Calu3 (cell line): ENCODE measurements at regions of chr2 and their contacts with region 1.

Region 1: GRCh38 chr2:43226558-43226954 is at the start of gene ZFP36L2:
- DNase-seq: peak; percentile 98
- H3K4me3 Mint-ChIP-seq: peak within 1 kb of the TSS; percentile 98
- H3K27ac Mint-ChIP-seq: peak within 1 kb of the TSS; percentile 94
- H3K4me1 Mint-ChIP-seq: peaks cover 26% of the 10 kb centered on the region
- H3K27me3 Mint-ChIP-seq: no peaks in the 10 kb centered on the region
- CTCF ChIP-seq: no peak
- total RNA-seq, gene ZFP36L2: 90.7 and 120 TPM in 2 replicates

Region 2: DNA sequence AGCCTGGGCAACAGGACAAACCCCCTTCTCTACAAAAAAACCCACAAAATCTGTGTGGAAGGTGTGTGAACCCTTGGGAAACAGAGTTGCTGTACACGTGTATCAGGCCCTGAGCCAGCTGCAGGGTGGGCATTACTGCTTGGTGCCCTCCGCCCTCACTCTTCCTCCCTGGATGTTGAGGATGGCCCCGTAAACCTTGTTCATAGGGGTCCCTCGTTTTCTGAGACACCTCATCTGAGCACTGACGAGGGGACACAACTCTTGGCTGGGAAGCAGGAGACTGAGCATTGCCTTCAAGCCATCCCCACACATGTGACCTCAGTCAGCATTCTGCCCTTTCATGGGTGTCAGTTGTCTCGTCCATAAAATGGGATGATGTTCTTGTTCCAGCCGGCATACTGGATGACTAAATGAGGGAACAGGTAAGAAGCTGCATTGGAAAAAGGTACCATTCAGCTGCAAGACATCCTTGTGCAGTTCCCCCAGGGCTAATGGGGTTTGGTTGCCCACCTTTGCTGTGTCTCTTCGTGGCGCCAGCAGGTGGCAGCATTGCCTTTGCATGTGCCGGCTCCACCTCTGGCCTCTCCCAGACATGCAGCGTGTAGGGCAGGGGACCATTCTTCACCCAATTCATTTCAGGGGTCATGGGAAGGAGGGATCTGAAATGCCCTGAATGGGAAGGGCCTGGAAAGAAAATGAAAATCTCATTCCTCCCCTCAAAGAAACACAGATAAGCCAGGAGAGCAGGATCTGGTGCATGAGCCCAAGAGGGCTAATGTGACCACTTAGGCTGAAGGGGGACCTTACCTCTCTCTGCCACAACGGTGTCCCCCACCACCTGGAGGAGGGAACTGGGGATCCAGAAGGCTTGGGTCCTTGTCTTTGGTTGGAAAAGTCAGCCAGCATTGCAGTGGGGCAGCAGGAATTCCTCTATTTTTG is 397.8 kb before region 1 on chr2:
- CTCF ChIA-PET with region 1: interaction called, 8 read pairs
- intact Hi-C with region 1: loop called (anchors 2 kb)
- DNase-seq: peak; percentile 82
- H3K4me3 Mint-ChIP-seq: no peak overlapping the region
- H3K27ac Mint-ChIP-seq: no peak overlapping the region
- H3K4me1 Mint-ChIP-seq: peaks cover 27% of the 10 kb centered on the region
- H3K27me3 Mint-ChIP-seq: no peaks in the 10 kb centered on the region
- CTCF ChIP-seq: peak; percentile 90

Region 3: GRCh38 chr2:42859006-42859552 is 367.5 kb before region 1 on chr2:
- CTCF ChIA-PET with region 1: interaction called, 3 read pairs
- intact Hi-C with region 1: loop called (anchors 2 kb)
- DNase-seq: peak; percentile 84
- H3K4me3 Mint-ChIP-seq: no peak overlapping the region
- H3K27ac Mint-ChIP-seq: no peak overlapping the region
- H3K4me1 Mint-ChIP-seq: peaks cover 8% of the 10 kb centered on the region
- H3K27me3 Mint-ChIP-seq: no peaks in the 10 kb centered on the region
- CTCF ChIP-seq: peak; percentile 82

Region 4: DNA sequence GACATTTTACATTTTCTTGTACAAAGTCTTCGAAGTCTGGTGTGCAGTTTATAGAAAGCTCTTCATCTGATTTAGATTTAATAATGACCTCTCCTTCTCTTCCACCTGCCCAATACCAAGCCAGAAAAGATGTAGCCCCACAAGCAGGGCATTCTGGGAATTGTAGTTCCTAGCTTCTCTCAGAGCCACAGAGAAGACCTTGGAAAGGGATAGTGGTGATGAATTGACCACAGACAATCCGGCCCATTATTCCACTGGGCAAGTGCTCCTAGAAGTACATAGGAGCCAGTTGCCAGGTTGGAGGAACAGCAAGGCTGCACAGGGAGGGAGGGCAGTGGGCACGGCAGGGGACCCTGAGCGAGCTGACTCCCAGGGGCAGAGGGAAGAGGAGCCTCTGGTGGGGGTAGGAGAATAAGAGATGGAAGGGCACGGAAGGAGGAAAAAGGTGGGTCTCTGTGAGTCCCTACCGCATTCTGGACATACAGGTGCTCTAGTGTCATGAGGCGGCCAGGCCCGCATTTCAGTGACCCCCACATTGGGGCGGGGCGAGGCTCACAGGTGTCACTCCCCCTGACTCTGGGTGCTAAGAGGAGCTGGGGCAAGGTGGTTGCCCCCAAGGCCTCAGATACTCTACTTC is 281.7 kb before region 1 on chr2:
- CTCF ChIA-PET with region 1: interaction called, 4 read pairs
- intact Hi-C with region 1: loop called (anchors 2 kb)
- DNase-seq: no peak
- H3K4me3 Mint-ChIP-seq: no peak overlapping the region
- H3K27ac Mint-ChIP-seq: no peak overlapping the region
- H3K4me1 Mint-ChIP-seq: peaks cover 29% of the 10 kb centered on the region
- H3K27me3 Mint-ChIP-seq: no peaks in the 10 kb centered on the region
- CTCF ChIP-seq: no peak

Region 5: DNA sequence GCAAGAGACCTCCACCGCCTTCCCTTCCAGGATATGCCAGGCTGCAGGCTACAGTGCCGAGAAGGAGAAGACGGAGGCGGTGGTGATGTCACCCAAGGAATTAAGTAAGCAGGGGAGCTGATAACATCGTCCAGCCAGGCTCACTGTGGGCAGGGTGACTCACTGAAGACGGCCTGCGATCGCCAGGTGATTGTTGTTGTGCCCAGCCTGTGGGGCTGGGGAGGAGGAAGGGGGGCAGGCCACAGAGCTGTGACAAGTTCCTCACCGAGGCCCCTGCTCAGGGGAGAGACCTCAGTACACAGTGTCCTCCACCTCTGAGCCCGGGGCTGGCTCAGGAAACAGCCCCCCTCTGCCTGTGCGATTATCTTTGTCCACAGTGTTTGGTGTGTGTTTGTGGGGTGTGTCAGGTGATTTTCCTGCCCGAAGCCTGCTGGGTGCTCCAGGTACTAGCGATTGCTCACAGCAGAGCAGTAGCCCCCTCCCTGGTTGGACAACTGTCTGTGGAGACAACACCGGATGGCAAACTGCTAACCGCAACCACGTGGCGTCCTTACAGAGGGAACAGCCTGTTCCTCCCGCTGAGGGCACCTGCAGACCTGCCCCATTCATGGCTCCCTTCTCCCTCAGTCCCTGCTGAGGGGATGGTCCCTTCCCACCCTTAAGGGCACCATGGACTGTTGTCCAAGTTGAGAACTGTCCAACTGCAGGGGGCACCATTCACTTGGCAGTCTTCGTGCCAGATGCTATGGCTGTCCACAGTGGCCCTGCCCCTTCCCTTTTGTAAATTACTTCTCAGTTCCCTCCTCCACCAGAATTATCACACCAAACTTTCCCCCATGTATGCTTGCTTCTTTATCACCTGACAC is 95.3 kb before region 1 on chr2:
- CTCF ChIA-PET with region 1: interaction called, 11 read pairs
- intact Hi-C with region 1: loop called (anchors 2 kb)
- DNase-seq: peak; percentile 84
- H3K4me3 Mint-ChIP-seq: no peak overlapping the region
- H3K27ac Mint-ChIP-seq: peak overlapping the region; percentile 62
- H3K4me1 Mint-ChIP-seq: peaks cover 44% of the 10 kb centered on the region
- H3K27me3 Mint-ChIP-seq: no peaks in the 10 kb centered on the region
- CTCF ChIP-seq: no peak

Region 6: DNA sequence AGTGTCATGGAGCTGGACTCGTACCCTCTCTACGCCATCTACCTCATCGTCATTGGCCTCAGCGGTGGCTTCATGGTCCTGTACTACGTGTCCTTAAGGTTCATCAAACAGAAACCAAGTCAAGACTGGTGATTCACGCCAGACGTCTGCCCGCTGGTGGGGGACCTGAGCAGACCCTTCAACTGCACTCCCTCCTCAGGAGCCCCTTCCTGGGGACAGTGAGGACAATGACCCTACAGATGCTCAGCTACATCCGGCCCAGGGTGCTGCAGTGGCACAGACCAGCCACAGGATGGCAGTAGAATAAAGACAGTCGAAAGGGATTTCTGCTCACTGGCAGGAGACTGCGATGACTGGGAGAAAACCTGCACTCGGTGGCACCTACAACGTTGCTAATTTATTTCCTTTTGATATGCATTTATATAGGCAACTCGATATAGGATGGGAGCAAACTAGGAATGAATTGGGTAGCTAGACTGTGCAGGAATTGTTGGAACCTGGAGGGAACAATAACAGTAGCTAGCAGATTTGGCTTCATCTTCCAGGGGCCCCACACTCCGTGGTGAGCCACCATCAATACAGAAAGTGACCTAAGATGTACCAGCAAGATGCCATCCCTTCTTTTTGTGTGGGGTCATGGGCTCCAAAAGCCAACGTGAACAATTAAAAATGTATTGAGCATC is 651.4 kb after region 1 on chr2:
- CTCF ChIA-PET with region 1: no interaction called
- intact Hi-C with region 1: no loop called
- DNase-seq: peak; percentile 78
- H3K4me3 Mint-ChIP-seq: no peak overlapping the region
- H3K27ac Mint-ChIP-seq: no peak overlapping the region
- H3K4me1 Mint-ChIP-seq: no peaks in the 10 kb centered on the region
- H3K27me3 Mint-ChIP-seq: peaks cover 15% of the 10 kb centered on the region
- CTCF ChIP-seq: peak; percentile 95